K562 (cell line): ENCODE measurements at regions of chr19 and their contacts with region 1.

Region 1: DNA sequence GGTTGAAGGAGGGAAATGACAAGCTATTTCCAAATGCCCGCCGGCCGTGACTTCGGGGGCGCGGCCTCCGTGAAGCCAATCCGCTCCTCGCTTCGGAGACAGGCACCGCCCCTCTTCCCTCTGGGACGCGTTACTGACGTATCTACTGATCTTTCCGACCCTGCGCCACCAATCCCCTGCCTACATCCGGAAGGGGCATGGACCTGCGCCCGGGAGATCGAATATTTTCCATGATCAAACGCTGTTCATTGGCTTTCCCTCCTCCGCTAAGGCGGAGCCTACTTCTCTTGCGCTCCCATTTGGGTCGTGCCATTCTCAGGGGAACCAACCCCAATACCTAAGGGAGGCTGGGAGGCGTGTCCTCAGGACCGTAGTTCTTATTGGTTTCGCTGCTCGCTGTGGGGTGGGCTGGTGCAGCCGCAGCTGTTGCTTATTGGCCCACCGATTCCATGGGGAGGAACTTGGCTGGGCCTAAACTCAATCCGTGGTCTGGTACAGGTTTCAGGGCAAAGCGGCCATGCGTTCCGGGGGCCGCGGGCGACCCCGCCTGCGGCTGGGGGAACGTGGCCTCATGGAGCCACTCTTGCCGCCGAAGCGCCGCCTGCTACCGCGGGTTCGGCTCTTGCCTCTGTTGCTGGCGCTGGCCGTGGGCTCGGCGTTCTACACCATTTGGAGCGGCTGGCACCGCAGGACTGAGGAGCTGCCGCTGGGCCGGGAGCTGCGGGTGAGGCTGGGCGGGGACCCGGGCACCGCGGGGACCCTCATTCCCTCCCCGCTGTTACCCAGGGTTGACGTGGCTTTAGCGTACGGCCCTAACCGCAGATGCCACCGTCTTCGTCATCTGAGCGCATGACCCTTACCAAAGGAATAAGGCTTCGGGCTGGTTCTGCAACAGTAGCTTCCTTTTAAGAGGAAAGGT is at the start of gene QPCTL:
- DNase-seq: peak; percentile 85 to 99 (median 92)
- ATAC-seq: peak; percentile 95
- H3K4me3 ChIP-seq: peak within 1 kb of the TSS; percentile 78
- H3K27ac ChIP-seq: peak within 1 kb of the TSS; percentile 91
- H3K4me1 ChIP-seq: peaks cover 10 to 20% of the 10 kb centered on the region in 2 experiments; a peak in 4 of 5 replicates
- H3K27me3 ChIP-seq: no peaks in the 10 kb centered on the region
- CTCF ChIP-seq: no peak
- EP300 ChIP-seq: no peak
- POLR2A ChIP-seq: peak; percentile 84
- RAD21 ChIP-seq: no peak
- polyA plus RNA-seq, gene QPCTL: 0.99 to 1.6 TPM

Region 2: DNA sequence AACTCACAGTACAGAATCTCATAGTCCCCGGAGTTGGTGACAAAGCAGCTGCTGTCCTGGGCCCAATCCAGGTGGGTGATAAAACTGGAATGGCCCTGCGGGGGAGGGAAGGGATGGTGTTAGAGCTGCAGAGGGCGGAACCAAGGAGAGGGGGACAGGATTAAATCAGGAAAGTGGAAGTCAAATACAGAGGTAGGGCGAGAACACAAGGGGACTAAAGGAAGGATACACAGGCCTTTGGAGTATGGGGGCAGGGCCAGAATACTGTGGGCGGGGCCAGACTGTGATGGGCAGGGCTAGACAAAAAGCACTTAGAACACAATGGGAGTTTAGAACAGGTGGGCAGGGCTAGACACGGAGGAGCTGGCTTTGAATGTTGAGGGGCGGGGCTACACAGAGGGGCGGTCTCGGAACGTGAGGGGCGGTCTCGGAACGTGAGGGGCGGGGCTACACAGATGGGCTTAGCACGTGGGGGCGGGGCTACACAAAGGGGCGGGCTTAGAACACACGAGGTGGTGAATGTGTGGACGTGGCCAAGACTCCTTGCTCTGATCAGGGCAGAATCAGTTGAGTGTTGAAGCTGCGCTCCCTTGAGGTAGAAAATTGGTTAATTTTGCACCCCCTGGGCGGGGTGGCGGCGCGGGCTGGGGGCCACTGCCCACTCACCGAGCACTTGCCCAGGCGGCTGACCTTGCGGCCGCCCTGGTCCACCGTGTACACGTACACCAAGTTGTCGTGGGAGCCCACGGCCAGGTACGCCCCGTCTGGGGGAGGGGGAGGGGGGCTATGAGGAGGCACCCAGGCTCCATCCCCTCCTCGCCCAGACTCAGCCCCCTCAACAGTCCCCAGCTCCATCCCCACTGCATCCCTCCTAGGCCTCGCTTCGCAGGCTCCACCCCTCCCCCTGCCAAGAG is 76.4 kb before region 1 on chr19:
- CTCF ChIA-PET with region 1: no interaction called
- POLR2A ChIA-PET with region 1: no interaction called
- in situ Hi-C with region 1: no loop called
- intact Hi-C with region 1: no loop called
- DNase-seq: peak; percentile 97 to 98 (median 98)
- ATAC-seq: peak; percentile 99
- H3K4me3 ChIP-seq: peak overlapping the region; percentile 33
- H3K27ac ChIP-seq: peak overlapping the region; percentile 81
- H3K4me1 ChIP-seq: peaks cover 11 to 19% of the 10 kb centered on the region in 2 experiments
- H3K27me3 ChIP-seq: no peaks in the 10 kb centered on the region
- CTCF ChIP-seq: no peak
- EP300 ChIP-seq: no peak
- POLR2A ChIP-seq: peak; percentile 78
- RAD21 ChIP-seq: no peak

Region 3: DNA sequence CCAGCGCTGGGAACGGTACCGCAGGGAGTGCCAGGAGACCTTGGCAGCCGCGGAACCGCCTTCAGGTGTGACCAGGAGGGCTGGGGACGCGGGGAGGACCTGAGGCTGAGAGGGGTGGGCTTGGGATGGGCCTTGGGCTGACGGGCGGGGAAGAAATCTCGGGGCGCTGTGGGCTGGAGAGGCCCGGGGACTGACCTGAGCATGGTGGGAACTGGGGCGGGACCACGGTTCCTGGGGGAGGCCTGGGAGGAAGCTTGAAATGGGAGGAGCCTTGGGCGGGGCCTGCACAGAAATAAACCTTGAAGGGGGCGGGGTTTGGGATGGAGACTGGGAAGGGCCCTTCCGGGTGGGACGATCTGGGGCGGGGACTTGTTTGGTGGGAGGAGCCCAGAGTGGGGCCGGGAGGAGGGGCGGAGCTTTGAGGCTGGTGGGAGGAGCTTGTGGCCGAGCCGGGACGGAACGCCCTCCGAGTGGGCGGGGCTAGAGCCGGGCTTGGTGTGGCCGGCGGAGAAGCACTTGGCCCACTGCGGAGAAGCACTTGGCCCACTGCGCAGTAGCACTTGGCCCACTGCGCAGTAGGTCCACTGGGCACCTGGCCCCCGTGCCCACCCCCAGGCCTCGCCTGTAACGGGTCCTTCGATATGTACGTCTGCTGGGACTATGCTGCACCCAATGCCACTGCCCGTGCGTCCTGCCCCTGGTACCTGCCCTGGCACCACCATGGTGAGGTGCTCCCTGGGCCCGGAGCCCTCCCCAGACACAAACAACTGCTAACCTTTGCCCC is 21.6 kb before region 1 on chr19:
- CTCF ChIA-PET with region 1: no interaction called
- POLR2A ChIA-PET with region 1: interaction called, 11 read pairs
- in situ Hi-C with region 1: no loop called
- intact Hi-C with region 1: no loop called
- DNase-seq: peak; percentile 98 to 100 (median 100)
- ATAC-seq: peak; percentile 84
- H3K4me3 ChIP-seq: peak overlapping the region; percentile 58
- H3K27ac ChIP-seq: peak overlapping the region; percentile 92; the same call in 2 of the 3 replicates
- H3K4me1 ChIP-seq: peaks cover 16 to 40% of the 10 kb centered on the region in 2 experiments; a peak in 4 of 5 replicates
- H3K27me3 ChIP-seq: no peaks in the 10 kb centered on the region
- CTCF ChIP-seq: no peak
- EP300 ChIP-seq: no peak
- POLR2A ChIP-seq: no peak; the same call in 1 of the 2 replicates
- RAD21 ChIP-seq: no peak

Region 4: DNA sequence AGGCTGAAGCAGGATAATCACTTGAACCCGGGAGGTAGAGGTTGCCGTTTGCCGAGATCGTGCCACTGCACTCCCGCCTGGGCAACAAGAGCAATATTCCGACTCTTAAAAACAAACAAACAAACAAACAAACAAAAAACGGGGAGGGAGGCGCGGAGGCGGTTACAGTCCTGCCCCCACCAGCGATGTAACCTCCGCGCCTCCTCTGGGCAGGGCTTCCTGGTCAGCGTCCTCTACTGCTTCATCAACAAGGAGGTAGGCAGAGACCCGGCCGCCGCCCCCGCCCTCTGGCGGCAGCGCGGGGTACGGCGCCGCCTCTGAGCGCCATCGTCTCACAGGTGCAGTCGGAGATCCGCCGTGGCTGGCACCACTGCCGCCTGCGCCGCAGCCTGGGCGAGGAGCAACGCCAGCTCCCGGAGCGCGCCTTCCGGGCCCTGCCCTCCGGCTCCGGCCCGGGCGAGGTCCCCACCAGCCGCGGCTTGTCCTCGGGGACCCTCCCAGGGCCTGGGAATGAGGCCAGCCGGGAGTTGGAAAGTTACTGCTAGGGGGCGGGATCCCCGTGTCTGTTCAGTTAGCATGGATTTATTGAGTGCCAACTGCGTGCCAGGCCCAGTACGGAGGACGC is 10.9 kb before region 1 on chr19:
- CTCF ChIA-PET with region 1: interaction called, 3 read pairs
- POLR2A ChIA-PET with region 1: interaction called, 15 read pairs
- in situ Hi-C with region 1: no loop called
- intact Hi-C with region 1: no loop called
- DNase-seq: peak; percentile 78 to 89 (median 83)
- ATAC-seq: peak; percentile 94
- H3K4me3 ChIP-seq: peak overlapping the region; percentile 20
- H3K27ac ChIP-seq: peak overlapping the region; percentile 32; the same call in 1 of the 3 replicates
- H3K4me1 ChIP-seq: peaks cover 3 to 24% of the 10 kb centered on the region in 2 experiments; a peak in 2 of 5 replicates
- H3K27me3 ChIP-seq: no peaks in the 10 kb centered on the region
- CTCF ChIP-seq: peak; percentile 90 to 95 (median 93)
- EP300 ChIP-seq: no peak
- POLR2A ChIP-seq: 0 out of 2 replicates have a peak, but pooled peaks have one; percentile 12
- RAD21 ChIP-seq: peak; percentile 62 to 76

Region 5: GRCh38 chr19:45705115-45705514 is 12.7 kb after region 1 on chr19:
- CTCF ChIA-PET with region 1: no interaction called
- POLR2A ChIA-PET with region 1: interaction called, 20 read pairs
- in situ Hi-C with region 1: no loop called
- intact Hi-C with region 1: no loop called
- DNase-seq: no peak
- ATAC-seq: peak; percentile 37; the same call in 2 of the 3 replicates
- H3K4me3 ChIP-seq: no peak overlapping the region
- H3K27ac ChIP-seq: no peak overlapping the region
- H3K4me1 ChIP-seq: no peaks in the 10 kb centered on the region; a peak in 1 of 5 replicates
- H3K27me3 ChIP-seq: no peaks in the 10 kb centered on the region
- CTCF ChIP-seq: no peak
- EP300 ChIP-seq: no peak
- POLR2A ChIP-seq: no peak
- RAD21 ChIP-seq: no peak

Region 6: GRCh38 chr19:45711851-45712698 is 19.6 kb after region 1 on chr19:
- CTCF ChIA-PET with region 1: interaction called, 3 read pairs
- POLR2A ChIA-PET with region 1: interaction called, 30 read pairs
- in situ Hi-C with region 1: no loop called
- intact Hi-C with region 1: no loop called
- DNase-seq: no peak
- ATAC-seq: no peak
- H3K4me3 ChIP-seq: no peak overlapping the region
- H3K27ac ChIP-seq: no peak overlapping the region
- H3K4me1 ChIP-seq: peaks cover 10 to 22% of the 10 kb centered on the region in 2 experiments; a peak in 4 of 5 replicates
- H3K27me3 ChIP-seq: no peaks in the 10 kb centered on the region
- CTCF ChIP-seq: no peak
- EP300 ChIP-seq: no peak
- POLR2A ChIP-seq: no peak
- RAD21 ChIP-seq: no peak

Region 7: GRCh38 chr19:45717166-45717982 is 24.9 kb after region 1 on chr19:
- CTCF ChIA-PET with region 1: interaction called, 3 read pairs
- POLR2A ChIA-PET with region 1: interaction called, 30 read pairs
- in situ Hi-C with region 1: no loop called
- intact Hi-C with region 1: no loop called
- DNase-seq: peak; percentile 97 to 99 (median 98)
- ATAC-seq: peak; percentile 98
- H3K4me3 ChIP-seq: peak overlapping the region; percentile 63
- H3K27ac ChIP-seq: peak overlapping the region; percentile 96
- H3K4me1 ChIP-seq: peaks cover 22 to 30% of the 10 kb centered on the region in 2 experiments
- H3K27me3 ChIP-seq: no peaks in the 10 kb centered on the region
- CTCF ChIP-seq: peak in 2 of 3 experiments; percentile 35 to 36; a peak in 3 of 6 replicates
- EP300 ChIP-seq: peak; percentile 81
- POLR2A ChIP-seq: peak; percentile 70
- RAD21 ChIP-seq: no peak

Region 8: GRCh38 chr19:45770192-45771101 is 78.0 kb after region 1 on chr19:
- CTCF ChIA-PET with region 1: no interaction called
- POLR2A ChIA-PET with region 1: interaction called, 11 read pairs
- in situ Hi-C with region 1: no loop called
- intact Hi-C with region 1: no loop called
- DNase-seq: peak; percentile 93 to 99 (median 96)
- ATAC-seq: peak; percentile 87
- H3K4me3 ChIP-seq: peak overlapping the region; percentile 56
- H3K27ac ChIP-seq: peak overlapping the region; percentile 75
- H3K4me1 ChIP-seq: peaks cover 10 to 69% of the 10 kb centered on the region in 2 experiments; a peak in 4 of 5 replicates
- H3K27me3 ChIP-seq: no peaks in the 10 kb centered on the region
- CTCF ChIP-seq: peak; percentile 83 to 91 (median 91)
- EP300 ChIP-seq: no peak
- POLR2A ChIP-seq: peak; percentile 73
- RAD21 ChIP-seq: peak; percentile 59 to 61